PC-3 (cell line): ENCODE measurements at regions of chr4 and their contacts with region 1.

Region 1: GRCh38 chr4:109424093-109424841 is 9.3 kb upstream of the SEC24B start:
- DNase-seq: no peak
- ATAC-seq: no peak
- H3K4me3 ChIP-seq: no peak overlapping the region
- H3K27ac ChIP-seq: no peak overlapping the region
- H3K4me1 ChIP-seq: no peaks in the 10 kb centered on the region
- H3K27me3 ChIP-seq: no peaks in the 10 kb centered on the region
- CTCF ChIP-seq: no peak

Region 2: DNA sequence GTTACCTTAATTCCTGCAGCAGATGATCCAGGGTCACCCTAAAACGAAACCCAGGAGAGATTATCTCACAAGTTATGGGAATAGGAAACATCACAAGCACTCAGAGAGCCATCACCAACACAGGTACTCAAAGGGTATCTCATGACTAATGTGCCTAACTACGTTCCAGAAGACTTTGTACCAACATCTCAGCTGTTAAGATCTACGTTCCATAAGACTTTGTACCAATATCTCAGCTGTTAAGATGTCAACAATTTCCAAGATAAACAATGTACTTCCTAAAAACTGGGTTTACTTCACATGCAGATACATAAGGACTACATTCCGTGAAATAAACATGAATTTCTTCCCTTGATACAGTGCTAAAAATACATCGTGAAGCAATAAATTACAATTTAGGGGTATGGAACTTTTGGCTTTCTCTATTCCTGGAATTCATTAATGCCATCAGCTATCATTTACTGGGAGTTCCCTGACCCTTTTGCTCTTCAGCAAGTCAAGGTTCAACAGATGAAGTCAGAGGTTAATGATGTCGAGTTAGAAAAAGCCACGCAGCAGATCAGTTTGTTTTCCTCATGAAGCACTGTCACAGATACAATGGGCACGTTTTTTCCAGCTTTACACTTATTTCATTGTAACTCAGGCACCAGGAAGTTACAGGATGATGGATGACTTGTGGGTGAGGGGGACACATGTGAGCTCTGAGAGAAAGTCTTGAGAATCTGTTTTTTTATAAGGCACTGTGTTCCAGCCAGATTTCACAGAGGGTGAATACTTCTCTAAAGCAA is 534.4 kb before region 1 on chr4:
- CTCF ChIA-PET with region 1: no interaction called
- POLR2A ChIA-PET with region 1: no interaction called
- intact Hi-C with region 1: no loop called
- DNase-seq: no peak
- ATAC-seq: no peak
- H3K4me3 ChIP-seq: no peak overlapping the region
- H3K27ac ChIP-seq: no peak overlapping the region
- H3K4me1 ChIP-seq: no peaks in the 10 kb centered on the region
- H3K27me3 ChIP-seq: peaks cover 11% of the 10 kb centered on the region; the same call in 1 of the 2 replicates
- CTCF ChIP-seq: no peak

Region 3: DNA sequence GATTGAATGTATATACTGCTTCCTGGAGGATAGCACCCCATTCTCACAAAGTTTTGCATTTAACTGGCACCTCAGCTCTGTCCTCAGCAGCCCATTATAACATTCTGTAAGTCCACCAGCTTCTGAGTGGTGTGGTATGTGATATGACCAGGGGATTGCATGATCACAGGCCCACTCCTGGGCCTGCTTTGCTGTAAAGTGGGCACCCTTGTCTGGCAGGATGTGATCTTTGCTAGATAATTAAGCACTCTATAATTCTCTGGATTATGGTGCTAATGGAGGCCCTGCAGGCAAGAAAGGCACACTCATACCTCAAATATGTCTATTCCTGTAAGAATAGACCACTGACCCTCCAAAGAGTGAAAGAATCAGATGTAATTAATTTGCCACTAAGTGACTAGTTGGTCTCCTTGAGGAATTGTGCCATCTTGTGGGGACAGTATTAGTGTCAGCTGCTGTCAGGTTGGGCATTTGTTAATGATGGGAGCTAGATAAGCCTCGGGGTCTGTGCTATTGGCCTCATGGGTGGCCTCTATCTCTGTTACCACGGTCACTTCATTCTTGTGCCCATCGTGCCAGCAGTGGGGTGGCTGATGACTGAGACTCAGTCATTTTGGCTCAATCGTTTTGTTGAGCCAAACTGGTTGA is 379.8 kb after region 1 on chr4:
- CTCF ChIA-PET with region 1: no interaction called
- POLR2A ChIA-PET with region 1: no interaction called
- intact Hi-C with region 1: loop called (anchors 2 kb)
- DNase-seq: peak; percentile 58
- ATAC-seq: peak; percentile 80
- H3K4me3 ChIP-seq: no peak overlapping the region
- H3K27ac ChIP-seq: no peak overlapping the region
- H3K4me1 ChIP-seq: no peaks in the 10 kb centered on the region
- H3K27me3 ChIP-seq: no peaks in the 10 kb centered on the region
- CTCF ChIP-seq: peak; percentile 68